ENCODE measurements at regions of chr11 and their contacts with region 1.

Region 1: DNA sequence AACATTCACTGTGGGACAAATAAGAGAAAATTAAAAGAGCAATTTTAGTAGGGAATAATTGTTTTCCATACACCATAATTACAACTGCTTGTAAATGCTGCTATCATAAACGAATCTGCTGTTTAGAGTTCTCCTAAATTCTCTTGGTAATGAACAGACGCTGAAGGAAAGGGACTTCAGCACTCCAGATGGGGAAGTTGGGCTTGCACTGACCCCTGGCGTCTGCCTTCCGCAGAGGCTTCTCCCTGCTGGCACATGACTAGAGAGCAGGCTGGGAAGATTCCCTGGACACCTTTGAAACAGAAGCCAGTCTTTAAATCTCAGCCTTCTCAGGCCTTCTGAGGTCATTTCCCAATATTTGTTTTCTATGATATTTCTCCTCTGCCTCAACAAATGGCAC is 84.1 kb downstream of the NXPE2 start:
- DNase-seq: peak; percentile 89

Region 2: GRCh38 chr11:114330373-114330772 is 432.0 kb before region 1 on chr11:
- intact Hi-C with region 1: loop called in 1 of 2 experiments (anchors 5 kb)
- DNase-seq: no peak

Region 3: DNA sequence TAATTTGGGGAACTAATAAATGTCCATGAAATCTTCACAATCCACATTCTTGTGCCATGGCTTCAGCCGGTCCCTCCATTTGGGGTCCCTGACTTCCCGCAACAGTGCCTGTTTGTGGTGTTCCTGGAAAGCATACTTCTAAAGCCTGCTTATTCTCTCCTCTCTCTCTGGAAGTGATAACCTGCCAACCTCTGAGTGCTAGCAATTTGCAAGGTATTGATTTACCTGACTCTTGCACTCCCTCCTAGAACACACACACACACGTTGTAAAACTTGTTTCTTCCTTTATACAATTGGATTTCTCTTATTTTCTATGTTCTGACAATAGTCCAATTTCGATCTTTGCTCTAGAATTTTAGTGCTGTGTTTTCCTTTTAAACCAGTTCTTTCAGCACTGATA is 25.6 kb before region 1 on chr11:
- intact Hi-C with region 1: loop called in 1 of 2 experiments (anchors 2 kb)
- DNase-seq: no peak

Region 4: DNA sequence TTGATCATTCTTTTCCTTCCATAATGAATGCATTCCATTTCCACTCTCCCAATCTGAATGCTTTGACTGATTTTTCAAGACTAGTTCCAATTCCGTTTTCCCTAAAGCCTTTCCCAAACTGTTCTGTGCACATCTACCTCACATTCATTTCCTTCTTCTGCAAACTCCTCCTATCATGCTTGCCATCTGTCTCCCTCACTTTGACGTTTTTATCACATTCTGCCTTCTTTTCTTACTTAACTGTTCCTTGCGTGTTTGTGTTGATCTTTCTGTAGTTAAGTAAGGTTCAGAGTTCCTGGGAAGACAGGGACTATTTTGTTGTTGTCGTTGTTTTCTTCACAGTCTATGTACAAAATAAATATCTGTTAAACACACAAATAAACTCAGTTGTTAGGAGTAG is 94.9 kb after region 1 on chr11:
- intact Hi-C with region 1: no loop called
- DNase-seq: no peak